IMR-90 (cell line): ENCODE measurements at regions of chr12 and their contacts with region 1.

Region 1: GRCh38 chr12:7319930-7320329 is 16.1 kb downstream of the ACSM4 start:
- DNase-seq: no peak
- ATAC-seq: no peak
- H3K4me3 ChIP-seq: no peak overlapping the region
- H3K27ac ChIP-seq: no peak overlapping the region
- H3K4me1 ChIP-seq: no peaks in the 10 kb centered on the region
- H3K27me3 ChIP-seq: no peaks in the 10 kb centered on the region
- CTCF ChIP-seq: peak; percentile 26; the same call in 1 of the 2 replicates
- POLR2A ChIP-seq: no peak
- RAD21 ChIP-seq: no peak

Region 2: DNA sequence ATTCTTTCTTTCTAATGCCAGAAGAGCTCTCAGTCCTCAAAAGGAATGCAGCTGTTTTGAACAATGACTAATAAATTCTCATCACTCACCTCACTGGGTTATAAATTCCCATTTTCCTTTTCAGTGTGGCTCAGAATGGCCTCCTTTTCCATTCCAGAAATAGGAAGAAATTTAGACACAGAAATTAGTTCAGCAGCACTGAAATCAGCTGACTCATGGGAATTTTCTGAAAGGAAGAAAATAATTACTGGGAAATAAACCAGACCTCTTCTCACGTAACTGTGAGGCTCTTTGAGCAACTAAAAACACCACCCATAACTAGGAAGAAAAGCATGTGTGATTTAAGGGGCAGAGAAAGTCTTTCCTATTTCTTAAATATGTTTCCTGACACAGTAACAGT is 159.8 kb after region 1 on chr12:
- CTCF ChIA-PET with region 1: interaction called, 11 read pairs
- POLR2A ChIA-PET with region 1: no interaction called
- dilution Hi-C with region 1: no loop called
- in situ Hi-C with region 1: no loop called
- intact Hi-C with region 1: no loop called
- DNase-seq: no peak
- ATAC-seq: no peak
- H3K4me3 ChIP-seq: no peak overlapping the region
- H3K27ac ChIP-seq: no peak overlapping the region
- H3K4me1 ChIP-seq: no peaks in the 10 kb centered on the region
- H3K27me3 ChIP-seq: no peaks in the 10 kb centered on the region
- CTCF ChIP-seq: no peak
- POLR2A ChIP-seq: no peak
- RAD21 ChIP-seq: no peak